CD8-positive, alpha-beta memory T cell (primary cell): ENCODE measurements at regions of chr1 and their contacts with region 1.

Region 1: GRCh38 chr1:237789619-237790018 is 101.1 kb downstream of the ZP4 start:
- DNase-seq: peak in 1 of 5 donors; percentile 27
- H3K4me3 ChIP-seq: no peak overlapping the region
- H3K4me3 Mint-ChIP-seq: no peak overlapping the region
- H3K27ac ChIP-seq: no peak overlapping the region
- H3K27ac Mint-ChIP-seq: peak overlapping the region in 1 of 8 donors; percentile 3
- H3K4me1 ChIP-seq: no peaks in the 10 kb centered on the region
- H3K4me1 Mint-ChIP-seq: no peaks in the 10 kb centered on the region
- H3K27me3 ChIP-seq: no peaks in the 10 kb centered on the region
- H3K27me3 Mint-ChIP-seq: peaks cover 0 to 1% of the 10 kb centered on the region in 2 donors

Region 2: DNA sequence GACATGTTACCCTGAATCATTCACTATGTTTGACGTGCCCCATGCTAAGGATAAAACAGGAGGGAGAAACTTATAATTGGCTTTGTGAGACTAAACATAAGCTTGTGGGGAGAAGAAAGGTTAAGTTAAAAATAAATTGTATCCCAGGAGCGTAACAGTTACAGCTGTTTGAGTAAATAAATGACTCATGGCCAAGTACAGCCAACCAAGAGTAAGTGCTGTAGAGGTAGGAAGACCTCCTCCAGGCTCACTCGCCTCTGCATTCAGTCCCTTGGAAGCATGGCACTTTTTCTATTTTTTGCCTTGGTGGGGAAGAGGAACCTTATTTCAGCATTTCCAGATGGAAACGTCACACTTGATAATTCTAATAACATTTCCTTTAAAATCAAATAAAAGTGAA is 15.4 kb before region 1 on chr1:
- CTCF ChIA-PET with region 1: no interaction called
- POLR2A ChIA-PET with region 1: interaction called, 12 read pairs
- DNase-seq: no peak
- H3K4me3 ChIP-seq: no peak overlapping the region
- H3K4me3 Mint-ChIP-seq: no peak overlapping the region
- H3K27ac ChIP-seq: no peak overlapping the region
- H3K27ac Mint-ChIP-seq: no peak overlapping the region
- H3K4me1 ChIP-seq: no peaks in the 10 kb centered on the region
- H3K4me1 Mint-ChIP-seq: no peaks in the 10 kb centered on the region
- H3K27me3 ChIP-seq: no peaks in the 10 kb centered on the region
- H3K27me3 Mint-ChIP-seq: no peaks in the 10 kb centered on the region